Activated naive CD4-positive, alpha-beta T cell treated with anti-CD3 and anti-CD28 coated beads for 36 hours (primary cell): ENCODE measurements at regions of chr4 and their contacts with region 1.

Region 1: GRCh38 chr4:109815151-109816081 is at the start of gene GAR1:
- DNase-seq: peak; percentile 93
- H3K4me3 Mint-ChIP-seq: peak within 1 kb of the TSS; percentile 99
- H3K27ac Mint-ChIP-seq: peak within 1 kb of the TSS; percentile 95
- H3K4me1 Mint-ChIP-seq: peaks cover 47% of the 10 kb centered on the region
- H3K27me3 Mint-ChIP-seq: no peaks in the 10 kb centered on the region
- total RNA-seq, gene GAR1: 18.9 to 24.4 TPM

Region 2: GRCh38 chr4:109658871-109659410 is 156.5 kb before region 1 on chr4:
- CTCF ChIA-PET with region 1: no interaction called
- intact Hi-C with region 1: loop called (anchors 5 kb)
- DNase-seq: peak; percentile 63
- H3K4me3 Mint-ChIP-seq: no peak overlapping the region
- H3K27ac Mint-ChIP-seq: no peak overlapping the region
- H3K4me1 Mint-ChIP-seq: peaks cover 46% of the 10 kb centered on the region
- H3K27me3 Mint-ChIP-seq: no peaks in the 10 kb centered on the region

Region 3: DNA sequence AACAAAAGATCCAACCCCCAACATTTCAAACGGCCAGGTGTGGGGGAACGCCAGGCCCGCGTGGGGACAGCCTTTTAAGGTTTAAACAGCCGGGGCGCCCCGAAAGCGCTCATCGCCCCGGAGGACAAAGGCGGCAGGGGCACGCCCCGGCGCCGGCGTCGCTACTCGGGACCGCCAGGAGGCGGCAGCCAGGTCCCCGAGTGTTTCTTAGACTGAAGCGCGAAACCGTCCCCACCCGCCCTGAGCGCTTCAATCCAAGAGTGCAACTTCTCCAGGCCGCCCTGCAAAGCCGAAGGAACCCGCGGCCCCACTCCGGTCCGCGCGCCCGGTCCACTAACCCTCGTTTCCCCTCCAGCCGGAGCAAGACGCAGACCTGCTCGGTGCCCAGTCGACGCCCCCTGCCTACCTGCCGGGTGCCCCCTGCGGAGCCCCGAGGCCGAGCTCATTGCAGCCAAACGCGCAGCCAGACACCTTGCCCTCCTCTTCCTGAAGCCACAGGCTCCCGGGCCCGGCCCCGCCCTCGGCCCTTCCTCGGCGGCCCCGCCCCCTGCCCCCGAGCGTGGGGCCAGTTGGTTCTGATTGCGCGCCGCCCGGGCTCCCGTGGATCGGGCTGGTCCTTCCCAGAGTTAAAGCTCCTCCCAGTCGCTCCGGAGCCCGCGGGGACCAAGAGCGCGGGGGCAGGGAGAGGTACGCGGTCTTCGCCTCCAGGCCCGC is 112.3 kb before region 1 on chr4 and contains the start of gene CASP6:
- CTCF ChIA-PET with region 1: no interaction called
- intact Hi-C with region 1: loop called (anchors 1 kb)
- DNase-seq: peak; percentile 76
- H3K4me3 Mint-ChIP-seq: peak within 1 kb of the TSS; percentile 86
- H3K27ac Mint-ChIP-seq: peak within 1 kb of the TSS; percentile 82
- H3K4me1 Mint-ChIP-seq: peaks cover 28% of the 10 kb centered on the region
- H3K27me3 Mint-ChIP-seq: no peaks in the 10 kb centered on the region
- total RNA-seq, gene CASP6: 11.5 to 12.1 TPM

Region 4: GRCh38 chr4:109729718-109730618 is 85.4 kb before region 1 on chr4 and contains the start of gene PLA2G12A:
- CTCF ChIA-PET with region 1: no interaction called
- intact Hi-C with region 1: loop called (anchors 1 kb)
- DNase-seq: peak; percentile 66
- H3K4me3 Mint-ChIP-seq: peak within 1 kb of the TSS; percentile 87
- H3K27ac Mint-ChIP-seq: peak within 1 kb of the TSS; percentile 39
- H3K4me1 Mint-ChIP-seq: peaks cover 15% of the 10 kb centered on the region
- H3K27me3 Mint-ChIP-seq: no peaks in the 10 kb centered on the region
- total RNA-seq, gene PLA2G12A: 22.8 to 24.3 TPM